ENCODE measurements at regions of chr22 and their contacts with region 1.

Region 1: GRCh38 chr22:29245637-29246385 is 22.0 kb downstream of the RHBDD3 start:
- DNase-seq: peak; percentile 63 to 82
- ATAC-seq: peak; percentile 87 to 96 (median 92)
- H3K4me3 ChIP-seq: no peak overlapping the region
- H3K27ac ChIP-seq: no peak overlapping the region
- H3K4me1 ChIP-seq: no peaks in the 10 kb centered on the region
- H3K27me3 ChIP-seq: no peaks in the 10 kb centered on the region
- CTCF ChIP-seq: peak; percentile 96

Region 2: DNA sequence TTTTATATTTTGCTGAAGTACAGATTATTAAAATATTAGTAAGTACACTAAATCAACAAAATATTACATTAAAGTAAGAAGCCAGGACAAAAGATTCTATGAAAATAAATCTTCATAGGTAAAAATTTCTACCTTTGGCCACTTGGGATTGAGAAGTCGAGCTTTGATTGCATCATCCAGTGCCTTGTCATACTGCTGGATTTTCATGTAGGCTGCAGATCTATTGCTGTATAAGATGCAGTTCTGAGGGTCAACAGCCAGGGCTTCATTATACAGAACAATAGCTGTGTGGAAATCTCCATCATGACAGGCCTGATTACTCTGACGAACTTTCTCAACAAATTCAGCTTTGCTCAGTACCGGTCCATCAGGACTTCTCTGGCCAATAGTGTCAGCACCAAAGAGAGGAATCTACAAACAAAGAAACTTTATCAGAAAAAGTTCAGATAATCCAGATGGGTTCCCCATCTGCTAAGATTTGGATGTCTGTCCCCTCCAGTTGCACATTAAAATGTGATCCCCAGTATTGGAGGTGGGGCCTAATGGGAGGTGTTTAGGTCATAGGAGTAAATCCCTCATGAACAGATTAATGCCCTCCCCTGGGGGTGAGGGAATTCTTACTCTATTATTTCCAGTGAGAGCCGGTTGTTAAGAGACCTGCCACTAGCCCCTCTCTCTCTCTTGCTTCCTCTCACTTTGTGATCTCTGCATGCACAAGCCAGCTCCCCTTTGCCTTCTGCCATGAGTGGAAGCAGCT is 616.2 kb before region 1 on chr22:
- intact Hi-C with region 1: loop called in 1 of 2 experiments (anchors 10 kb)
- DNase-seq: no peak
- ATAC-seq: no peak
- H3K4me3 ChIP-seq: no peak overlapping the region
- H3K27ac ChIP-seq: no peak overlapping the region
- H3K4me1 ChIP-seq: no peaks in the 10 kb centered on the region
- H3K27me3 ChIP-seq: no peaks in the 10 kb centered on the region
- CTCF ChIP-seq: no peak

Region 3: DNA sequence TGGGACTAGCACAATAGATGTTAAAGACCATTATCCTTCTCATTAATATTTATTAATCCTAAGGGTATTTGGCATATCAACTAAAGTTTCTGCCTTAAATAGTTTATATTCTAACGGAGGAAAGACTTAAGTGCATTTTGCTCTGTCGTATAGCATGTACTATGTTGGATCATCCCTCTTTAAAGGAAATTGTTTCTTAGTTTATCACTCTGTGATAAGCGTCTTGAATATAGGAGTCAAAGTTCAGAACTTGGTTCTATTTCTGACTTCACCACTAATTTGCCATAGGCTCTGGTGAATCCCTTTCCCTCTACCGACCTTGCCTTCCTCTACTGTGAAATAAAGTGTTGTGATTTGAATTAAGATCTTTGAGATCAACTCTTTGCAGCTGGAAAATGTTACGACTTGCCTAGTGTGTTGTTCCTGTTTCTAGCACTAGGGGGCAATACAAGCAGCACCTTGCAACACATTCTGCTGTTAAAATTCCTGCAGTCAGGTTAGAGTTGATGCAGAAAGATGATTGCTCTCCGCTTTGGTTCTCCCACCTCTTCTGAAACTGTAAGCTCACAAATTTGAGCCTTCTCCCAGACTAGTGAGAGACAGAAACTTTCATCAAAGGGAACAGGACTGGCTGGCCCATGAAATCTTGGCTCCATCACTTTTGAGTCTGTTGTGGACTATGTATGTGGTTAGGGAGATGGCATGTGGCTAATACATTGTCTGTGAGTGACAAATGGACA is 390.3 kb before region 1 on chr22:
- intact Hi-C with region 1: loop called (anchors 5 to 10 kb)
- DNase-seq: no peak
- ATAC-seq: peak; percentile 69 to 83 (median 80)
- H3K4me3 ChIP-seq: no peak overlapping the region
- H3K27ac ChIP-seq: no peak overlapping the region
- H3K4me1 ChIP-seq: peaks cover 15% of the 10 kb centered on the region
- H3K27me3 ChIP-seq: no peaks in the 10 kb centered on the region
- CTCF ChIP-seq: peak; percentile 93

Region 4: GRCh38 chr22:29062286-29062821 is 183.5 kb before region 1 on chr22:
- intact Hi-C with region 1: loop called in 1 of 2 experiments (anchors 10 kb)
- DNase-seq: no peak
- ATAC-seq: peak in 3 of 4 donors; percentile 27 to 41 (median 36)
- H3K4me3 ChIP-seq: no peak overlapping the region
- H3K27ac ChIP-seq: no peak overlapping the region
- H3K4me1 ChIP-seq: peaks cover 30% of the 10 kb centered on the region
- H3K27me3 ChIP-seq: no peaks in the 10 kb centered on the region
- CTCF ChIP-seq: no peak

Region 5: GRCh38 chr22:29195118-29195963 is 50.5 kb before region 1 on chr22:
- intact Hi-C with region 1: no loop called
- DNase-seq: no peak
- ATAC-seq: no peak
- H3K4me3 ChIP-seq: no peak overlapping the region
- H3K27ac ChIP-seq: no peak overlapping the region
- H3K4me1 ChIP-seq: no peaks in the 10 kb centered on the region
- H3K27me3 ChIP-seq: no peaks in the 10 kb centered on the region
- CTCF ChIP-seq: no peak

Measured in psoas muscle (tissue), 8 donors.